ENCODE measurements at regions of chr7 and their contacts with region 1.

Region 1: DNA sequence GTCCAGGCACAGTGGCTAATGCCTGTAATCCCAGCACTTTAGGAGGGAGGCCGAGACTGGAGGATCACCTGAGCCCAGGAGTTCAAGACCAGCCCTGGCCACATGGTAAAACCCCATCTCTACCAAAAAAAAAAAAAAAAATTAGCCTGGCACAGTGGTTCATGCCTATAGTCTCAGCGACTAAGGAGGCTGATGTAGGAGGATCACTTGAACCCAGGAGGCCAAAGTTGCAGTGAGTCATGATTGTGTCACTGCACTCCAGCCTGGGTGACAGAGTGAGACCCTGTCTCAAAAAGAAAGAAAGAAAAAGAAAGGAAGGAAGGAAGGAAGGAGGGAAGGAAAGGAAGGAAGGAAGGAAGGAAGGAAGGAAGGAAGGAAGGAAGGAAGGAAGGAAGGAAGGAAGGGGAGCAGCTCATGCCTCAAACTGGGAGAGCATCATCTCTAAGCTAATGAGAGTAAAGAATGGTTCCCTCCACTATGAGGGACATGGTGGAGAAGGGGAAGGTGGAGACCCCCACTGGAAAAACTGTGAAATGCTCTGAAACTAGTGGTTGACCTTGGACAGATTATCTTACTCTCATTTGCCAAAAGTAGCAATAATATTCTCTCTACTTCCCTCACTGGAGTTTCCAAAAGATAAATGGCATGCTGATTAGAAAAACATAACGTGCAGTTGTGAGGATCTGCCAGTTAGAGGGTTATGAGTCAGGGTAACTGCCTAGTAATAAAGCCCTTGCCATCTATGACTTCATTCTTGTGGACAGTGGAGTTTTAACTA is 16.8 kb downstream of the GIMAP5 start:
- DNase-seq: peak in 1 of 2 donors; percentile 43
- ATAC-seq: peak; percentile 36 to 67 (median 54)
- H3K4me3 ChIP-seq: no peak overlapping the region
- H3K27ac ChIP-seq: peak overlapping the region in 9 of 10 donors; percentile 25 to 87 (median 83)
- H3K4me1 ChIP-seq: peaks cover 20 to 68% (median 51%) of the 10 kb centered on the region in 9 donors
- H3K27me3 ChIP-seq: no peaks in the 10 kb centered on the region
- CTCF ChIP-seq: peak in 7 of 9 donors; percentile 8 to 62 (median 50)

Region 2: GRCh38 chr7:150520145-150520544 is 233.9 kb before region 1 on chr7:
- intact Hi-C with region 1: loop called in 2 of 10 experiments (anchors 5 to 10 kb)
- DNase-seq: no peak
- ATAC-seq: peak in 2 of 8 donors; percentile 47 to 52
- H3K4me3 ChIP-seq: peak overlapping the region in 9 of 10 donors; percentile 9 to 68 (median 57)
- H3K27ac ChIP-seq: peak overlapping the region; percentile 27 to 95 (median 80)
- H3K4me1 ChIP-seq: peaks cover 0 to 10% (median 0%) of the 10 kb centered on the region in 9 donors
- H3K27me3 ChIP-seq: no peaks in the 10 kb centered on the region
- CTCF ChIP-seq: no peak

Region 3: DNA sequence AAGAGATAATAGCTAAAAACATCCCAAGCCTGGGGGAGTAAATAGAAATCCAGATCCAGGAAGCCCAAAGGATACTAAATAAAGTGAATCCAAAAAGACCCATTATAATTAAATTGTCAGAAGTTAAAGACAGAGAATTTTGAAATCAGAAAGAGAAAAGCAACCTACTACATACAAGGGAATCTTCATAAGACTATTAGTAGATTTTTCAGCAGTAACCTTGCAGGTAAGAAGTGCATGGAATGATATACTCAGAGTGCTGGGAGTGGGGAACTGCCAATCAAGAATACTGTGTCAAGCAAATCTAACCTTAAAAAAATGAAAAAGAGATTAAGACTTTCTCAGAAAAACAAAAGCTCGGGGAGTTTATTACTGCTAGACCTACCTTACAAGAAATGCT is 50.8 kb before region 1 on chr7:
- intact Hi-C with region 1: no loop called
- DNase-seq: no peak
- ATAC-seq: no peak
- H3K4me3 ChIP-seq: no peak overlapping the region
- H3K27ac ChIP-seq: no peak overlapping the region
- H3K4me1 ChIP-seq: no peaks in the 10 kb centered on the region
- H3K27me3 ChIP-seq: no peaks in the 10 kb centered on the region
- CTCF ChIP-seq: no peak

Measured in heart right ventricle (tissue), 16 donors.